ENCODE measurements at regions of chr19 and their contacts with region 1.

Region 1: GRCh38 chr19:14419106-14419813 is at the start of gene DDX39A:
- DNase-seq: peak; percentile 86 to 99 (median 97)
- ATAC-seq: peak; percentile 83 to 94 (median 92)
- H3K4me3 ChIP-seq: peak within 1 kb of the TSS; percentile 68 to 83
- H3K4me3 Mint-ChIP-seq: peak within 1 kb of the TSS; percentile 86 to 95 (median 94)
- H3K27ac ChIP-seq: peak within 1 kb of the TSS; percentile 96
- H3K27ac Mint-ChIP-seq: peak within 1 kb of the TSS; percentile 95 to 97
- H3K4me1 ChIP-seq: peaks cover 13 to 52% of the 10 kb centered on the region in 2 experiments
- H3K4me1 Mint-ChIP-seq: peaks cover 33 to 40% (median 35%) of the 10 kb centered on the region in 3 donors
- H3K27me3 ChIP-seq: no peaks in the 10 kb centered on the region
- H3K27me3 Mint-ChIP-seq: no peaks in the 10 kb centered on the region
- total RNA-seq, gene DDX39A: 159 to 280 (median 179) TPM

Region 2: GRCh38 chr19:12825254-12826131 is 1593.8 kb before region 1 on chr19:
- CTCF ChIA-PET with region 1: no interaction called
- POLR2A ChIA-PET with region 1: no interaction called
- DNase-seq: peak in 2 of 35 experiments; percentile 17 to 27
- ATAC-seq: peak in 1 of 4 experiments; percentile 53
- H3K4me3 ChIP-seq: peak overlapping the region in 1 of 2 donors; percentile 18
- H3K4me3 Mint-ChIP-seq: peak overlapping the region in 2 of 3 donors; percentile 13 to 42
- H3K27ac ChIP-seq: no peak overlapping the region
- H3K27ac Mint-ChIP-seq: no peak overlapping the region
- H3K4me1 ChIP-seq: peaks cover 0 to 13% of the 10 kb centered on the region in 2 experiments
- H3K4me1 Mint-ChIP-seq: peaks cover 7 to 9% (median 7%) of the 10 kb centered on the region in 3 donors
- H3K27me3 ChIP-seq: peaks cover 2 to 68% of the 10 kb centered on the region in 2 experiments
- H3K27me3 Mint-ChIP-seq: peaks cover 39 to 63% of the 10 kb centered on the region in 2 donors

Region 3: GRCh38 chr19:13872695-13873389 is 546.4 kb before region 1 on chr19:
- CTCF ChIA-PET with region 1: no interaction called
- POLR2A ChIA-PET with region 1: interaction called in 1 of 2 experiments, 10 read pairs
- DNase-seq: peak in 15 of 35 experiments; percentile 22 to 52 (median 40)
- ATAC-seq: peak; percentile 72 to 89 (median 74)
- H3K4me3 ChIP-seq: peak overlapping the region in 1 of 2 donors; percentile 10
- H3K4me3 Mint-ChIP-seq: peak overlapping the region; percentile 43 to 72 (median 60)
- H3K27ac ChIP-seq: no peak overlapping the region
- H3K27ac Mint-ChIP-seq: no peak overlapping the region
- H3K4me1 ChIP-seq: peaks cover 2 to 18% of the 10 kb centered on the region in 2 experiments
- H3K4me1 Mint-ChIP-seq: peaks cover 5 to 8% (median 7%) of the 10 kb centered on the region in 3 donors
- H3K27me3 ChIP-seq: peaks cover 0 to 83% of the 10 kb centered on the region in 2 experiments
- H3K27me3 Mint-ChIP-seq: peaks cover 3 to 29% of the 10 kb centered on the region in 2 donors

Region 4: GRCh38 chr19:14248578-14249011 is 170.7 kb before region 1 on chr19:
- CTCF ChIA-PET with region 1: no interaction called
- POLR2A ChIA-PET with region 1: no interaction called
- DNase-seq: peak in 27 of 35 experiments; percentile 1 to 55 (median 27)
- ATAC-seq: peak; percentile 71 to 83 (median 80)
- H3K4me3 ChIP-seq: peak overlapping the region in 1 of 2 donors; percentile 60
- H3K4me3 Mint-ChIP-seq: peak overlapping the region; percentile 60 to 73 (median 62)
- H3K27ac ChIP-seq: peak overlapping the region; percentile 44
- H3K27ac Mint-ChIP-seq: peak overlapping the region in 1 of 2 donors; percentile 22
- H3K4me1 ChIP-seq: peaks cover 0 to 24% of the 10 kb centered on the region in 2 experiments
- H3K4me1 Mint-ChIP-seq: peaks cover 4 to 18% (median 6%) of the 10 kb centered on the region in 3 donors
- H3K27me3 ChIP-seq: peaks cover 0 to 4% of the 10 kb centered on the region in 2 experiments
- H3K27me3 Mint-ChIP-seq: peaks cover 0 to 2% of the 10 kb centered on the region in 2 donors

Region 5: DNA sequence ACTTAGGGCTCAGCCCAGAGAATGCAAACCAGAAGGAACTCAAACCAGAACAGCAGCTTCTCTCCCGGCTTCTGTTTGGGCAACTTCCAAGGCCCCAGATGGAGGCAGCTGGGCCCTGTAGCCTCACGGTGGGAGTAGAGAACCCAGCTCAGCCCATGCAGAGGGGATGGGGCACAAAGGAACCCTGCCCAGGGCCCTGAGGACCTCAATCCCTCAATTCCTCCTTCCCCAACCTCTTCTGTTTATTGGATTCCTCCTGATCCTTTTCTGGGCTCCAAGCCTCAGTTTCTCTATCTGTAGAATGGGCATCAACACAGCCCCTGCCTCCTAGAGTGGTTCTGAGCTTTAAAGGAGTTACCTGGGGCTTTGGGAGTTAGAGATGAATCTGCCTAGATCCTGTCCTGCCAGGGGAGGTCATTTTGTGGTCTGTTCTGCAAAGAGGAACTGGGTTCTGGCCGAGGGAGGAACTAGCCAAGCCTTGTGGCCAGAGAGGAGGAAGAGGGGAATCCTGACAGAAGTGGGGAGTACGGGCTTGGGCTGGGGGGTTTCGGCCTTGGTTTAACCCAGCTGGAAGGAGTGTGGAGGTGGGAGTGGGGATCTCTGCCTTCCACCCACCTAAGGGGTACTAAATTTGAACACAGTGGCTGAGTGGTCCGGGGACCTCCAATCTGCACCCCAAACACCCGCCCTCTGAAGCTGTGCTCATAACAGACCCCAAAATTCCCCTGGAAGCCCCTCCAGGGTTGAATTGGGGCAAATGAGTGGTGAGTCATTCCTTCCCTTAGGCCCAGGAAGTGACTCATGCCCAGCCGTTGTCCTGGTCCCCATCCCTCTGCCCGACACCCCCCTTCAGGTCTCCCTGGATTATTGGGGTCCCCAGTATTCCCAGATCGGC is 35.4 kb before region 1 on chr19:
- CTCF ChIA-PET with region 1: interaction called in 1 of 2 experiments, 3 read pairs
- POLR2A ChIA-PET with region 1: interaction called in 1 of 2 experiments, 10 read pairs
- DNase-seq: peak in 4 of 35 experiments; percentile 32 to 77 (median 52)
- ATAC-seq: peak in 3 of 4 experiments; percentile 7 to 22 (median 12)
- H3K4me3 ChIP-seq: peak overlapping the region; percentile 83 to 88
- H3K4me3 Mint-ChIP-seq: peak overlapping the region; percentile 86 to 94 (median 87)
- H3K27ac ChIP-seq: peak overlapping the region; percentile 99
- H3K27ac Mint-ChIP-seq: peak overlapping the region; percentile 96 to 97
- H3K4me1 ChIP-seq: peaks cover 19 to 81% of the 10 kb centered on the region in 2 experiments
- H3K4me1 Mint-ChIP-seq: peaks cover 44 to 57% (median 49%) of the 10 kb centered on the region in 3 donors
- H3K27me3 ChIP-seq: no peaks in the 10 kb centered on the region
- H3K27me3 Mint-ChIP-seq: no peaks in the 10 kb centered on the region

Region 6: GRCh38 chr19:14405758-14406644 is 13.3 kb before region 1 on chr19:
- CTCF ChIA-PET with region 1: interaction called, 3 to 5 read pairs
- POLR2A ChIA-PET with region 1: interaction called in 1 of 2 experiments, 14 read pairs
- DNase-seq: peak; percentile 75 to 94 (median 86)
- ATAC-seq: peak; percentile 61 to 82 (median 75)
- H3K4me3 ChIP-seq: no peak overlapping the region
- H3K4me3 Mint-ChIP-seq: peak overlapping the region in 1 of 3 donors; percentile 53
- H3K27ac ChIP-seq: peak overlapping the region; percentile 64
- H3K27ac Mint-ChIP-seq: peak overlapping the region in 1 of 2 donors; percentile 63
- H3K4me1 ChIP-seq: peaks cover 0 to 58% of the 10 kb centered on the region in 2 experiments
- H3K4me1 Mint-ChIP-seq: peaks cover 31 to 46% (median 32%) of the 10 kb centered on the region in 3 donors
- H3K27me3 ChIP-seq: no peaks in the 10 kb centered on the region
- H3K27me3 Mint-ChIP-seq: no peaks in the 10 kb centered on the region

Region 7: GRCh38 chr19:14432791-14433553 is 13.7 kb after region 1 on chr19 and contains the start of gene PKN1:
- CTCF ChIA-PET with region 1: interaction called in 1 of 2 experiments, 6 read pairs
- POLR2A ChIA-PET with region 1: interaction called, 6 to 10 read pairs
- DNase-seq: peak in 8 of 35 experiments; percentile 29 to 60 (median 38)
- ATAC-seq: peak; percentile 38 to 47 (median 44)
- H3K4me3 ChIP-seq: peak within 1 kb of the TSS; percentile 46 to 86
- H3K4me3 Mint-ChIP-seq: peak within 1 kb of the TSS; percentile 83 to 88 (median 87)
- H3K27ac ChIP-seq: peak within 1 kb of the TSS; percentile 83
- H3K27ac Mint-ChIP-seq: peak within 1 kb of the TSS; percentile 92 to 94
- H3K4me1 ChIP-seq: peaks cover 7 to 48% of the 10 kb centered on the region in 2 experiments
- H3K4me1 Mint-ChIP-seq: peaks cover 39 to 49% (median 42%) of the 10 kb centered on the region in 3 donors
- H3K27me3 ChIP-seq: peaks cover 0 to 9% of the 10 kb centered on the region in 2 experiments
- H3K27me3 Mint-ChIP-seq: no peaks in the 10 kb centered on the region
- total RNA-seq, gene PKN1: 170 to 272 (median 224) TPM